CD4-positive, alpha-beta memory T cell (primary cell): ENCODE measurements at regions of chr17 and their contacts with region 1.

Region 1: DNA sequence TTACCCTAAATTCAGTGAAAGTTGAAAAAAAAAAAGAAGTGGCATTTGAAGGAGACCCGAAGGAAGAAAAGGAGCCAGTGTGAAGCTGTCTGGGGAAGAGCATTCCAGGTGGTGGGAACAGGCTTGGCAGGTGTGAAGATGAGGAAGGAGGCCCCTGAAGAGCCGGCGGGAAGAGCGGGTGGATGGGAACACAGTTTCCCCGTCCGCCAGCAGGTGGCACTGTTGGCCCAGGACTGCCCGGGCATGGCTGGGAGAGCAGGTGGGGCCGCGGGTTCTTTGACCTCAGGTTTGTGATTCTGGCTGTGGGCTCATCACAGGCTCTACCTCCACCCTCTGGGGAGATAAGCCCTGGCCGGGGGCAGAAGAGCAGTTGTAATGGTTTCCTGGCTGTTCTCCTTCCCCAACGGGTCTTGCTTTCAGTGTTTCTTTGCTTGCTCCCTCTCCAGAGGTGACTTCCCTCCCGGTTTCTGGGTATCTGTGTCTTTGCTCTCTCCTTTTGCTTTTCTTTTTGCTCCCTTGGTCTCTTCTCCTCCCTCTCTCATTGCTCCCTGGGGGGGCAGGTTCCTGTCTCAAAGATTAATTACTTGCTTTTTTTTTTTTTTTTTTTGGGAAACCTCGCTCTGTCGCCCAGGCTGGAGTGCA is 32.3 kb downstream of the RAP1GAP2 start:
- DNase-seq: peak; percentile 67 to 76 (median 71)
- H3K4me3 ChIP-seq: no peak overlapping the region
- H3K4me3 Mint-ChIP-seq: peak overlapping the region in 7 of 8 donors; percentile 42 to 70 (median 57)
- H3K27ac ChIP-seq: no peak overlapping the region
- H3K27ac Mint-ChIP-seq: peak overlapping the region in 5 of 7 donors; percentile 5 to 93 (median 67)
- H3K4me1 ChIP-seq: peaks cover 24% of the 10 kb centered on the region
- H3K4me1 Mint-ChIP-seq: peaks cover 20 to 40% (median 22%) of the 10 kb centered on the region in 4 donors
- H3K27me3 ChIP-seq: no peaks in the 10 kb centered on the region
- H3K27me3 Mint-ChIP-seq: peaks cover 0 to 1% of the 10 kb centered on the region in 2 donors

Region 2: DNA sequence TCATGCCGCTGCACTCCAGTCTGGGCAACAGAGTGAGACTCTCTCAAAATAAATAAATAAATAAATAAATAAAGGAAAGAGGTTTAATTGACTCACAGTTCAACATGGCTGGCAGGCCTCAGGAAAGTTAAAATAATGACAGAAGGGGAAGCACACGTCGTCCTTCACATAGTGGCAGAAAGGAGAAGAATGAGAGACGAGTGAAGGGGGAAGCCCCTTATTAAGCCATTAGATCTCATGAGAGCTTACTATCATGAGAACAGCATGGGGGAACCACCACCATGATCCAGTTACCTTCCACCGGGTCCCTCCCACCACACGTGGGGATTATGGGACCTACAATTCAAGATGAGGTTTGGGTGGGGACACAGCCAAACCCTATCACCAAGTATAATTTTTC is 180.6 kb before region 1 on chr17:
- CTCF ChIA-PET with region 1: no interaction called
- POLR2A ChIA-PET with region 1: no interaction called
- intact Hi-C with region 1: no loop called
- DNase-seq: no peak
- H3K4me3 ChIP-seq: no peak overlapping the region
- H3K4me3 Mint-ChIP-seq: no peak overlapping the region
- H3K27ac ChIP-seq: no peak overlapping the region
- H3K27ac Mint-ChIP-seq: no peak overlapping the region
- H3K4me1 ChIP-seq: no peaks in the 10 kb centered on the region
- H3K4me1 Mint-ChIP-seq: peaks cover 6 to 16% (median 9%) of the 10 kb centered on the region in 4 donors
- H3K27me3 ChIP-seq: no peaks in the 10 kb centered on the region
- H3K27me3 Mint-ChIP-seq: no peaks in the 10 kb centered on the region

Region 3: DNA sequence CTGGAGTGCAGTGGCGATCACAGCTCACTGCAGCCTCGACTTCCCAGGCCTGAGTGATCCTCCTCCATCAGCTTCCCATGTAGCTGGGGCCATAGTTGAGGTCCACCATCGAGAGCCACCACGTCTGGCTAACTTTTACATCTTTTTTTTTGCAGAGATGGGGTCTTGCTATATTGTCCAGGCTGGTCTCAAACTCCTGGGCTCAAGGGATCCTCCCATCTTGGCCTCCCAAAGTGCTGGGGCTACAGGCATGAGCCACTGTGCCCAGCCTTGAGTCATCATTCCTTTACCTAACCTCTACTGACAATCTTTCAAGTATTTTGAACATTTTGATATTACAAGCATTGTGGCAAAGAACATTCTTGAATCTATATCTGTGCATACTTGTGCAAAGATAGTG is 69.6 kb before region 1 on chr17:
- CTCF ChIA-PET with region 1: no interaction called
- POLR2A ChIA-PET with region 1: no interaction called
- intact Hi-C with region 1: no loop called
- DNase-seq: no peak
- H3K4me3 ChIP-seq: no peak overlapping the region
- H3K4me3 Mint-ChIP-seq: no peak overlapping the region
- H3K27ac ChIP-seq: no peak overlapping the region
- H3K27ac Mint-ChIP-seq: no peak overlapping the region
- H3K4me1 ChIP-seq: no peaks in the 10 kb centered on the region
- H3K4me1 Mint-ChIP-seq: peaks cover 2 to 7% (median 4%) of the 10 kb centered on the region in 4 donors
- H3K27me3 ChIP-seq: peaks cover 15% of the 10 kb centered on the region
- H3K27me3 Mint-ChIP-seq: peaks cover 28 to 33% of the 10 kb centered on the region in 2 donors

Region 4: DNA sequence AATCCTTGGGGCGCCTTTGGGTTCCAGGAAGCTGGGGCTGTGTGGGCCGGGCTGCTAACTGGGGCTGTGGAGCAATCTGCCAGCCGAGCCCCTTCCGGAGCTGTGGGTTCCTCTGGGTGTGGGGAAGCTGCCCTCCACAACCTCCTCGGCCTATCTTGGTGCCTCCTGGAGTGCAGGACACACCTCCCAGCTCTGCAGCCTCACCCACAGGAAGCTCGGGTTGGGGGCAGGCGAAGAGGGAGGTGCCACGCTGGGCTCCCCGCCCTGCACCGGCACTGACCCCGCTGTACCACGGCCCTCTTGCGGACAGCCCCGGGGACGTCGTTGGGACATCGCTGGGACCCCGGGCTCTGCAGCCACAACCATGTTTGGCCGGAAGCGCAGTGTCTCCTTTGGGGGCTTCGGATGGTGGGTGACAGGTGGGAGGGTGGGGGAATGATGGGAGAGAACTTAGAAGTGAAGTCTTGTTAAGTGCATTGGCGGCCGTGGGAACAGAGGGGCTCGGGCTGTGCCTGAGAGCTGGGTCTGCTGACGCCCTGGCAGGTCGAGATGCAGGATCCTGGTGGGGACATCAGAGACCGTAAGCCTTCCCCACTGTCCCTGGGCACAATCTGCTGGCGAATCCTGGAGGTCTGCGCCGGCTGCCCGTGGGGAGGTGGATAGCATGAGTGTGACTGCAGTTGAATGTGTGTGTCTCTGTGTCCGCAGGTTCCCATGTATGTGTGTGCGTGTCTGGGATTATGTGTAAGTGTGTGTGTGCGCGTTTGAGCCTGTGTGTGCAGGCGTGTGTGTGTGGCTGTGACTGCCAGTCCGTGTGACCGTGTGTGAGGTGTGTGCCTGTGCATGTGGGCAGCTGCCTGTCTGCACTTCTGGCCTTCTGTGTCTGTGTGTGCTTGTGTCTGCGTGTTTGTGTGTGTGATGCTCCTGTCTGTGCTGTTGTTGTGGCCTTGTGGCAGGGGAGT is 32.1 kb before region 1 on chr17 and contains the start of gene RAP1GAP2:
- CTCF ChIA-PET with region 1: interaction called, 146 read pairs
- POLR2A ChIA-PET with region 1: interaction called, 4 read pairs
- intact Hi-C with region 1: no loop called
- DNase-seq: peak; percentile 81 to 89 (median 85)
- H3K4me3 ChIP-seq: peak within 1 kb of the TSS; percentile 83 to 94
- H3K4me3 Mint-ChIP-seq: peak within 1 kb of the TSS; percentile 90 to 99 (median 97)
- H3K27ac ChIP-seq: peak within 1 kb of the TSS; percentile 51
- H3K27ac Mint-ChIP-seq: peak within 1 kb of the TSS; percentile 72 to 94 (median 89)
- H3K4me1 ChIP-seq: peaks cover 80% of the 10 kb centered on the region
- H3K4me1 Mint-ChIP-seq: peaks cover 47 to 88% (median 70%) of the 10 kb centered on the region in 4 donors
- H3K27me3 ChIP-seq: no peaks in the 10 kb centered on the region
- H3K27me3 Mint-ChIP-seq: no peaks in the 10 kb centered on the region
- total RNA-seq, gene RAP1GAP2: 9.0 to 9.9 TPM

Region 5: GRCh38 chr17:2975469-2975958 is 147.0 kb after region 1 on chr17:
- CTCF ChIA-PET with region 1: no interaction called
- POLR2A ChIA-PET with region 1: no interaction called
- intact Hi-C with region 1: no loop called
- DNase-seq: no peak
- H3K4me3 ChIP-seq: no peak overlapping the region
- H3K4me3 Mint-ChIP-seq: no peak overlapping the region
- H3K27ac ChIP-seq: no peak overlapping the region
- H3K27ac Mint-ChIP-seq: peak overlapping the region in 1 of 7 donors; percentile 78
- H3K4me1 ChIP-seq: no peaks in the 10 kb centered on the region
- H3K4me1 Mint-ChIP-seq: no peaks in the 10 kb centered on the region
- H3K27me3 ChIP-seq: no peaks in the 10 kb centered on the region
- H3K27me3 Mint-ChIP-seq: no peaks in the 10 kb centered on the region

Region 6: DNA sequence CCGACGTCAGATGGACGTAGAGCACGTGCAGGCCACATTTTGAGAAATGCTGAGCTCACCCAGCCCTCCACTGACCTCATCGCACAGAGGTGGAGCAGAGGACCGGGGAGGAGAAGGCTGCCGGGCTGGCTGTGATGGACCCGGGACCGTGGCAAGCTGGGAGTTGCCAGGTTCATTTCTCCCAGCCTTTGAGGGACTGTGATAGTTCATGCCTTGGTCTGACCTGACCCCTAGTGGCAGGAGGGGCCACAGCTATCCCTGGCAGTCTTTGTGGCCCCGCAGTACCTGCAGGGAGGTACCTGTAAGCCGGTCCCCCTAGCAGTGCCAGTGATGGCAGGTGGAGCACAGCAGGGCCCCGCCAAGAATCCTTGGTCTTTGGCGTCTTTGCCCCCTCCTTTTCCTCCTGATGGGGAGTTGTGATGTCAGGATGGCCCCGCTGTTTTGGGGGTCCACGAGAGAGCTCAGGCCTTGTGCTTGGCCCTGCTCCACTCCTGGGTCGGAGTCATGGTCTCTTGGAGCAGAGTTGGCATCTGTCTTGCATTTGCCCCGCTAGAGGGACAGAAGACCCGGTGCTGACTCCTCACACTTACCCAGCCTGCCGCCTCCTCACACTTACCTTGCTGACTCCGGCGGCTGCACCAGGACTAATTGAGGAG is 184.5 kb after region 1 on chr17:
- CTCF ChIA-PET with region 1: interaction called, 9 read pairs
- POLR2A ChIA-PET with region 1: no interaction called
- intact Hi-C with region 1: loop called (anchors 1 kb)
- DNase-seq: peak in 4 of 5 donors; percentile 24 to 36 (median 30)
- H3K4me3 ChIP-seq: no peak overlapping the region
- H3K4me3 Mint-ChIP-seq: no peak overlapping the region
- H3K27ac ChIP-seq: no peak overlapping the region
- H3K27ac Mint-ChIP-seq: peak overlapping the region in 3 of 7 donors; percentile 10 to 29 (median 29)
- H3K4me1 ChIP-seq: no peaks in the 10 kb centered on the region
- H3K4me1 Mint-ChIP-seq: no peaks in the 10 kb centered on the region
- H3K27me3 ChIP-seq: no peaks in the 10 kb centered on the region
- H3K27me3 Mint-ChIP-seq: no peaks in the 10 kb centered on the region